HEK293 (cell line): ENCODE measurements at regions of chr6 and their contacts with region 1.

Region 1: GRCh38 chr6:56914798-56915658 is 39.9 kb upstream of the BEND6 start:
- H3K4me3 ChIP-seq: no peak overlapping the region
- H3K27ac ChIP-seq: no peak overlapping the region
- H3K4me1 ChIP-seq: peaks cover 7% of the 10 kb centered on the region; the same call in 1 of the 2 replicates
- CTCF ChIP-seq: no peak

Region 2: GRCh38 chr6:56786256-56786655 is 128.8 kb before region 1 on chr6:
- CTCF ChIA-PET with region 1: no interaction called
- POLR2A ChIA-PET with region 1: interaction called, 10 read pairs
- H3K4me3 ChIP-seq: no peak overlapping the region
- H3K27ac ChIP-seq: no peak overlapping the region
- H3K4me1 ChIP-seq: peaks cover 3% of the 10 kb centered on the region; the same call in 1 of the 2 replicates
- CTCF ChIP-seq: no peak

Region 3: GRCh38 chr6:56927538-56928453 is 12.8 kb after region 1 on chr6:
- CTCF ChIA-PET with region 1: interaction called, 11 read pairs
- POLR2A ChIA-PET with region 1: no interaction called
- H3K4me3 ChIP-seq: no peak overlapping the region
- H3K27ac ChIP-seq: no peak overlapping the region
- H3K4me1 ChIP-seq: 0 out of 2 replicates have a peak, but pooled peaks cover 3% of the 10 kb centered on the region
- CTCF ChIP-seq: no peak

Region 4: GRCh38 chr6:56955171-56956045 is 40.4 kb after region 1 on chr6:
- CTCF ChIA-PET with region 1: interaction called, 12 read pairs
- POLR2A ChIA-PET with region 1: no interaction called
- H3K4me3 ChIP-seq: peak overlapping the region; percentile 62
- H3K27ac ChIP-seq: peak overlapping the region; percentile 70; the same call in 1 of the 2 replicates
- H3K4me1 ChIP-seq: peaks cover 6% of the 10 kb centered on the region
- CTCF ChIP-seq: peak; percentile 94